MCF 10A (cell line): ENCODE measurements at regions of chr3 and their contacts with region 1.

Region 1: GRCh38 chr3:7285505-7285904 is 424.6 kb downstream of the GRM7 start:
- DNase-seq: peak; percentile 51
- H3K4me3 Mint-ChIP-seq: no peak overlapping the region
- H3K27ac Mint-ChIP-seq: no peak overlapping the region
- H3K4me1 Mint-ChIP-seq: peaks cover 2% of the 10 kb centered on the region
- H3K27me3 Mint-ChIP-seq: no peaks in the 10 kb centered on the region
- CTCF ChIP-seq: peak; percentile 48

Region 2: DNA sequence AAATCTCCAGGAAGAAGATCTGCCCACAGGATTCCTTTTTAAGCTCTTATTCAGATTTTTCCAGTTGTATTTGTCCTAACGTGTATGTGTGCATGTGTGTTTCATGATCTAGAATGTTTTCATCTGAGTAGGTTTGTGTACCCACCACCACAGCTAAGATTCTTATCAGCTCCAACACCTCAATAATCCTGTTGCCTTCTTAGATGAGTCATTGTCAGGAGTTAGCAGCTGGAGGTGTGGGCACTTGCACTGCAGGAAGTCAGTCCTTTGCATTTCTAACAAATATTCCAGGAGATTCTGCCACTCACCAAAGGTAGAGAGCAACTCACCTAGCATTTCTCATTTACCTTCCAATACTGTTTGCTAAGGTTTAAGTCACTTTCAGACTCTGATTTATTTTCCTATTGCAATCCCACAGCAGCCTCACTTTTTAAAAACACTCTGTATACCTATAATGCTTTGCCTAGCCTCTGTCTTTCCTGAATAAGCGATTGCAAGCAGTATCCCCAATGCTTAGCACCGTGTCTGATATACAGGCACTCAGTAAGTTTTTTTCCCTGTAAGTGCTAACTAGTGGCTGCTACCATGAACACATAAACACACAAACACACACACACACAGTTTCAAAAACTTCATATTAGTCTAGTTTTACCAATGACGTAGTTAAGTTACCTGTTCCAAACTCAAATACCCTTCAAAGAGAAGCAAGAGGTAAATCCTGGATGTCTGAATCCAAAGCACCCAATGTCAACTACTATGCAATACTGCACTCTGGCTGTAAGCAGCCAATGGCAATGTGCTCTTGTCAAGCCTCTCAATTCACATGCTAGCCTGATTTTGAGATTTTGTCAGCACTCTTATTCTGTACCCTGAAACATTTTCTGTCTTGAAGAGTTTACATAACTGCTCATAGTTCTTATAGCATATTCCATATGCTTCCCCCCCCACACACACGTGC is 502.6 kb after region 1 on chr3:
- CTCF ChIA-PET with region 1: interaction called, 4 read pairs
- POLR2A ChIA-PET with region 1: no interaction called
- intact Hi-C with region 1: loop called (anchors 1 kb)
- DNase-seq: no peak
- H3K4me3 Mint-ChIP-seq: no peak overlapping the region
- H3K27ac Mint-ChIP-seq: peak overlapping the region; percentile 35
- H3K4me1 Mint-ChIP-seq: peaks cover 22% of the 10 kb centered on the region
- H3K27me3 Mint-ChIP-seq: no peaks in the 10 kb centered on the region
- CTCF ChIP-seq: no peak

Region 3: GRCh38 chr3:8095724-8096123 is 810.2 kb after region 1 on chr3:
- CTCF ChIA-PET with region 1: interaction called, 6 read pairs
- POLR2A ChIA-PET with region 1: no interaction called
- intact Hi-C with region 1: loop called (anchors 5 kb)
- DNase-seq: no peak
- H3K4me3 Mint-ChIP-seq: no peak overlapping the region
- H3K27ac Mint-ChIP-seq: no peak overlapping the region
- H3K4me1 Mint-ChIP-seq: peaks cover 7% of the 10 kb centered on the region
- H3K27me3 Mint-ChIP-seq: no peaks in the 10 kb centered on the region
- CTCF ChIP-seq: no peak